CD14-positive monocyte (primary cell): ENCODE measurements at regions of chr11 and their contacts with region 1.

Region 1: DNA sequence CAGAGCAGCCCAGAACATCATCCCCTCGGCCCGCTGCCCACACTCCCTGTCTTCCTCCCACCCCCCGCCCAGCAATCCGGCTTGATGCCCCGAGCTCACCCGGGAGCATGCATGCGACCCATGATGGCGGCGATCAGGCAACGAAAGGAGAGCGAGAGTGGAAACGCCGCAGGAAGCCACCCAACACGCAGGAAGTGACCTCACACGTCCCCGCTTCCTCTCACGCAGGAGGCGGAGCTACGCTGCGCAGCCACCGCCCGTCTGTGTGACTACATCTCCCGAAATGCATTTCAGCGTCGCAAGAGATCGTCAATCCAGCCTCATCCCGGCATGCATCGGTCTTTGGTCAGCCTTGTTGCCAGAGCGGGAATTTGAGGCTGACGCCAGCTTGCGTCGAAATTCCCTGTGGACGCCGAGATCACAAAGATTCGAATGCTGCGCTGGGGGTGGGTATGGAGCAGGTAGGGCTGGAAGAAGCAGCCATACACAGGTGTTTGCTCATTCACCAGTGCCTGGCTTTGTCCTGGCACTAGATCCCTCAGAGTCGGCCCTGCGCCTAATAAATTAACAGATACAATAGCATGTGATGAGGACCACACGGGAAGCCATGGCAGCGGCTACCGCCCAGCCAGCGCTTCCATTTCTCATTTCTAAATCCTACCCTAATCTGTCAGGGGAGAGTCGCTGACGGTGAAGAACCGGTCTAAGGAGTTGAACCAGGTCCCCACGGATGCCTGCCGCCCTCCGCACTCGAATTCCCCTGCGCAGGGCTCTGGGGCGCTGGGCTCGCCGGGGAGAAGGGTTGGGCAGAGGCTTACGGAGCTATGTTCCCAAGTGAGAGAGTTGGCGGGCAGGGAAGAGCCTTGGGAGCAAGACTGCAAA is at the start of gene RPS13:
- DNase-seq: peak; percentile 98
- H3K4me3 ChIP-seq: peak within 1 kb of the TSS; percentile 76 to 90 (median 77)
- H3K4me3 Mint-ChIP-seq: peak within 1 kb of the TSS; percentile 97 to 99
- H3K27ac ChIP-seq: peak within 1 kb of the TSS; percentile 96 to 98
- H3K27ac Mint-ChIP-seq: peak within 1 kb of the TSS; percentile 98 to 100 (median 99)
- H3K4me1 ChIP-seq: peaks cover 27 to 39% of the 10 kb centered on the region in 2 donors
- H3K4me1 Mint-ChIP-seq: peaks cover 39% of the 10 kb centered on the region
- H3K27me3 ChIP-seq: no peaks in the 10 kb centered on the region
- H3K27me3 Mint-ChIP-seq: no peaks in the 10 kb centered on the region
- CTCF ChIP-seq: no peak
- polyA plus RNA-seq, gene RPS13: 1,050 to 1,357 (median 1,271) TPM

Region 2: GRCh38 chr11:16392616-16393015 is 685.1 kb before region 1 on chr11:
- intact Hi-C with region 1: no loop called
- DNase-seq: no peak
- H3K4me3 ChIP-seq: no peak overlapping the region
- H3K4me3 Mint-ChIP-seq: no peak overlapping the region
- H3K27ac ChIP-seq: no peak overlapping the region
- H3K27ac Mint-ChIP-seq: no peak overlapping the region
- H3K4me1 ChIP-seq: no peaks in the 10 kb centered on the region
- H3K4me1 Mint-ChIP-seq: no peaks in the 10 kb centered on the region
- H3K27me3 ChIP-seq: no peaks in the 10 kb centered on the region
- H3K27me3 Mint-ChIP-seq: no peaks in the 10 kb centered on the region
- CTCF ChIP-seq: no peak

Region 3: GRCh38 chr11:16738193-16738946 is 339.4 kb before region 1 on chr11 and contains the start of gene C11orf58:
- intact Hi-C with region 1: loop called (anchors 2 to 5 kb)
- DNase-seq: peak; percentile 94 to 95 (median 95)
- H3K4me3 ChIP-seq: peak within 1 kb of the TSS; percentile 66 to 94 (median 83)
- H3K4me3 Mint-ChIP-seq: no peak within 1 kb of the TSS
- H3K27ac ChIP-seq: peak within 1 kb of the TSS; percentile 91 to 98
- H3K27ac Mint-ChIP-seq: peak within 1 kb of the TSS in 2 of 7 donors; percentile 53 to 65
- H3K4me1 ChIP-seq: peaks cover 24 to 27% of the 10 kb centered on the region in 2 donors
- H3K4me1 Mint-ChIP-seq: peaks cover 17% of the 10 kb centered on the region
- H3K27me3 ChIP-seq: no peaks in the 10 kb centered on the region
- H3K27me3 Mint-ChIP-seq: peaks cover 0 to 3% (median 0%) of the 10 kb centered on the region in 3 donors
- CTCF ChIP-seq: no peak
- polyA plus RNA-seq, gene C11orf58: 44.8 to 102 (median 94.5) TPM

Region 4: DNA sequence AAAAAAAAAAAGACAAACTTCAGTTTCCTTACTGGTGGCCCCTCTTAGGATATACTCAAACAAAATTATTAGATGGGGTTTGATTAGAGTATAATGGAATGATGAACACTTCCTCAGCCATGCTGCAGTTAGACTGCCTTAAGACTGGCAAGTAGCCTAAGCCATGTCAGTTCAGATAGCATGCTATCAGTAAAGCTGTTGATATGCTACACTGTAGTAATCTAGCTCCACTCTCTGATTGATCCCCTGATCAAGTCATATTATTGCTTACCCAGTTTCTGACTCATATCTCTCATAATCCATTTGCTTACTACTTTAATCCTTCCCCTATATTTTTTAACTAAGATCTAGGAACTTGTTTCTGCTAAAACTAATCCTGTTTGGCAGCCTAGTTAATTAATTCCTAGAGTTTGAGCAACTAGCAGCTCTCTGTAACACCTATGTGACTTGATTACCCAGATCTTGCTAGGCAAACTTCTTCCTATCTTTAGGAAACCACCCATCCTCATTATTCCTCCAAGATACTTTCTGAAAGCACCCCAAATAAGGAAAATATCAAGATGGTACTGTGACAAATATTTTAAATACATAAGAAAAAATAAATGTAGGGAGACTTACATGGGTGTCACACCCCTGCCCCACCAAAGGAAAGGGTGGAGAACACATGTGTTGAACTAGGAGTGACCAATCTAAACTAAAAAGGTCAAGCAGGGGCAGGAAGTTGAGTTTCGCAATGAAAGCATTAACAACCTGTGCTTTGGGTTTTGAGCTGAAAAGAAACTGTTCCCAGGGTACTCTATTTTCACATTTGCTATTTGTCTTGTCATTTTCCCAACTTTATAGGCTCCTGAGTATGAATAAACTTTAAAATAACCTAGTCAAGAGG is 86.8 kb after region 1 on chr11:
- intact Hi-C with region 1: no loop called
- DNase-seq: peak; percentile 9 to 46 (median 30)
- H3K4me3 ChIP-seq: peak overlapping the region in 1 of 3 experiments; percentile 56
- H3K4me3 Mint-ChIP-seq: peak overlapping the region in 1 of 2 donors; percentile 24
- H3K27ac ChIP-seq: peak overlapping the region in 1 of 2 donors; percentile 52
- H3K27ac Mint-ChIP-seq: peak overlapping the region; percentile 49 to 89 (median 79)
- H3K4me1 ChIP-seq: peaks cover 52 to 63% of the 10 kb centered on the region in 2 donors
- H3K4me1 Mint-ChIP-seq: peaks cover 61% of the 10 kb centered on the region
- H3K27me3 ChIP-seq: no peaks in the 10 kb centered on the region
- H3K27me3 Mint-ChIP-seq: peaks cover 0 to 2% (median 0%) of the 10 kb centered on the region in 3 donors
- CTCF ChIP-seq: no peak

Region 5: DNA sequence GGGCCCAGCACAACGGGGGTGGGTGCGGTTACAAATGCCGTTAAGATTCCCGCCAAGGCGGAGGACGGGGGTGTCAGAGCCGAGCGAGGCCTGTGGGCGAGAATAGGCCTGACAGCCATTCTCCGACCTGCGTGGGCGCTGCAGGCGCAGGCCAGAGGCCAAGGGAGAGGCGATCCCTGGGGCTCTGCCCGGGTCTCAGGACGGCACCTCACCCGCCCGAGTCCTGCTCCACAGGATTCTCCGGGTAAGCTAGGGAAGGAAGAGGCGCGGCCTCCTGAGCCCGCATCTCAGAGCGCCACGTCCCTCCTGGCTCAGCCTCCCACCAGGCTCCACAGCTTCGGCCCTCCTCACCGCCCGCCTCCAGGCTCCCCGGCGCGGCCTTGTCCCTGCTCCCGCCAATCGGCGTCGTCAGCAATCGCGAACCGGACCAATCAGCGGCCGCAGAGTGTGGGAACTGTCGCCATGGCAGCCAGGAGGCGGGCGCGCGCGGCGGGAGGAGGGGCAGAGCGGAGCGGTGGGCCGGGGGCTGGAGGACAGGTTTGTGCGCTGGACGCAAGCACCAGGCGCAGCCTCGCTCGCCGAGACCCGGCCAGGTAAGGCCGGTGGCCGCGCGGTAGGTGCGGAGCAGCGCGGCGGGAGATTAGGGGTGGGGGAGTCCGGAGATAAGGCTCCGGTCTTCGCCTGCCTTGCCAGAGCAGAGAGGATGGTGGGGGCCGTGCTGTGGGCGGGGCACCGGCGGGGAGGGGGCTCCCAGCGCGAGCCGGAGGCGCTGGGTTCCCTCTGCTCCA is 198.7 kb after region 1 on chr11 and contains the start of gene NUCB2:
- intact Hi-C with region 1: loop called in 1 of 2 experiments (anchors 5 kb)
- DNase-seq: peak; percentile 87 to 91 (median 89)
- H3K4me3 ChIP-seq: peak within 1 kb of the TSS; percentile 57 to 85 (median 64)
- H3K4me3 Mint-ChIP-seq: peak within 1 kb of the TSS; percentile 90 to 95
- H3K27ac ChIP-seq: peak within 1 kb of the TSS; percentile 74 to 86
- H3K27ac Mint-ChIP-seq: peak within 1 kb of the TSS; percentile 83 to 96 (median 90)
- H3K4me1 ChIP-seq: peaks cover 26 to 56% of the 10 kb centered on the region in 2 donors
- H3K4me1 Mint-ChIP-seq: peaks cover 55% of the 10 kb centered on the region
- H3K27me3 ChIP-seq: no peaks in the 10 kb centered on the region
- H3K27me3 Mint-ChIP-seq: peaks cover 0 to 1% (median 1%) of the 10 kb centered on the region in 3 donors
- CTCF ChIP-seq: no peak
- polyA plus RNA-seq, gene NUCB2: 8.6 to 41.3 (median 31.4) TPM